Heart left ventricle (tissue), 16 donors: ENCODE measurements at regions of chr11 and their contacts with region 1.

Region 1: GRCh38 chr11:130131961-130132850 is 27.4 kb upstream of the ST14 start:
- DNase-seq: peak in 1 of 5 donors; percentile 41
- ATAC-seq: peak in 3 of 4 donors; percentile 59 to 79 (median 74)
- H3K4me3 ChIP-seq: no peak overlapping the region
- H3K27ac ChIP-seq: no peak overlapping the region
- H3K4me1 ChIP-seq: peaks cover 0 to 4% (median 0%) of the 10 kb centered on the region in 12 donors
- H3K27me3 ChIP-seq: no peaks in the 10 kb centered on the region
- CTCF ChIP-seq: peak; percentile 73 to 89 (median 83)
- POLR2A ChIP-seq: no peak

Region 2: GRCh38 chr11:129917231-129917630 is 215.0 kb before region 1 on chr11:
- intact Hi-C with region 1: loop called in 5 of 10 experiments (anchors 2 kb)
- DNase-seq: no peak
- ATAC-seq: no peak
- H3K4me3 ChIP-seq: no peak overlapping the region
- H3K27ac ChIP-seq: no peak overlapping the region
- H3K4me1 ChIP-seq: no peaks in the 10 kb centered on the region
- H3K27me3 ChIP-seq: no peaks in the 10 kb centered on the region
- CTCF ChIP-seq: no peak
- POLR2A ChIP-seq: no peak

Region 3: GRCh38 chr11:129922674-129923073 is 209.5 kb before region 1 on chr11:
- intact Hi-C with region 1: loop called (anchors 1 to 2 kb)
- DNase-seq: no peak
- ATAC-seq: no peak
- H3K4me3 ChIP-seq: no peak overlapping the region
- H3K27ac ChIP-seq: no peak overlapping the region
- H3K4me1 ChIP-seq: peaks cover 0 to 4% (median 0%) of the 10 kb centered on the region in 12 donors
- H3K27me3 ChIP-seq: no peaks in the 10 kb centered on the region
- CTCF ChIP-seq: no peak
- POLR2A ChIP-seq: no peak

Region 4: DNA sequence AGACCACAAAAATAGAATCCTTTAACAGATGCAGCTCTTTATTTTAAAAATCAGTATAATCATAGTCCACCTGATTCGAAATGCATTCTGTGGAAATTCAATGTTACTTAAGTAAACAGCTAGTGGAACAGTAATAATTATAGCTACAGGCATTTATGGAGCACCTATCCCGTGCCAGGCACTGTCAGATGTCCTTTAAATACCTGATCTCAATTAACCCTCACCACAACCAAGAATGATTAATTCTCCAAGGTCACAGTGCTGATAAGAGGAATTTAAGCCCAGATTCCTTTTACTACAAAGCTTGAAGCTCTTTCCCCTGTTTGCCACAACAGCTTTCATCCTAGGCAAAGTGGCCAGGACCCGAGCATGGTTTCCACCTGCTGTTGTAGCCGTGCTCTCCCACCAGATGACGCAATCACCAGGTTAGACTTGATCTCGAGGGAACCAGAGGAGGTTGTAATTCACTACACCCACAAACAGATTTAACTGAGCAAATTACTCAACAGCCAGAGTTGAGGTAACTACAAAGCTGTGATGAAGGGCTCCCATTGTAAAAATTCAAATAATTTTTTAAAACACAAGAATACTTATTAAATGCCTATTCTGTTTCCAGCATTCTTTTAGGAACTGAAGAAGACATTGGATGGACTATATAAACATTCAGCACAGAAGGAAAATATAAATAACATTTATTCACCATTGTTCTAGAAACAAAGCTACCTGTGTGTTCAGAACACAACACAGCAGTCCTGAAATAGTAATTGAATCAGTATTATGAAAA is 139.9 kb before region 1 on chr11:
- intact Hi-C with region 1: loop called in 2 of 10 experiments (anchors 5 to 10 kb)
- DNase-seq: no peak
- ATAC-seq: peak in 3 of 4 donors; percentile 54 to 72 (median 57)
- H3K4me3 ChIP-seq: no peak overlapping the region
- H3K27ac ChIP-seq: no peak overlapping the region
- H3K4me1 ChIP-seq: peaks cover 0 to 25% (median 12%) of the 10 kb centered on the region in 12 donors
- H3K27me3 ChIP-seq: no peaks in the 10 kb centered on the region
- CTCF ChIP-seq: peak in 7 of 12 donors; percentile 16 to 39 (median 33)
- POLR2A ChIP-seq: no peak

Region 5: GRCh38 chr11:130002846-130003716 is 129.1 kb before region 1 on chr11:
- intact Hi-C with region 1: loop called in 7 of 10 experiments (anchors 5 to 10 kb)
- DNase-seq: peak; percentile 95 to 97 (median 96)
- ATAC-seq: peak; percentile 90 to 95 (median 92)
- H3K4me3 ChIP-seq: peak overlapping the region; percentile 55 to 94 (median 80)
- H3K27ac ChIP-seq: peak overlapping the region; percentile 95 to 100 (median 100)
- H3K4me1 ChIP-seq: peaks cover 0 to 25% (median 19%) of the 10 kb centered on the region in 12 donors
- H3K27me3 ChIP-seq: no peaks in the 10 kb centered on the region
- CTCF ChIP-seq: no peak
- POLR2A ChIP-seq: peak; percentile 67 to 90

Region 6: GRCh38 chr11:130069684-130070108 is 62.5 kb before region 1 on chr11 and contains the start of gene APLP2:
- intact Hi-C with region 1: loop called in 8 of 10 experiments (anchors 2 to 10 kb)
- DNase-seq: peak; percentile 99 to 100 (median 100)
- ATAC-seq: peak; percentile 94 to 98 (median 97)
- H3K4me3 ChIP-seq: peak within 1 kb of the TSS; percentile 59 to 99 (median 82)
- H3K27ac ChIP-seq: peak within 1 kb of the TSS; percentile 78 to 98 (median 95)
- H3K4me1 ChIP-seq: peaks cover 0 to 30% (median 20%) of the 10 kb centered on the region in 12 donors
- H3K27me3 ChIP-seq: no peaks in the 10 kb centered on the region
- CTCF ChIP-seq: no peak
- POLR2A ChIP-seq: peak; percentile 33 to 88
- total RNA-seq, gene APLP2: 215 to 423 (median 334) TPM

Region 7: DNA sequence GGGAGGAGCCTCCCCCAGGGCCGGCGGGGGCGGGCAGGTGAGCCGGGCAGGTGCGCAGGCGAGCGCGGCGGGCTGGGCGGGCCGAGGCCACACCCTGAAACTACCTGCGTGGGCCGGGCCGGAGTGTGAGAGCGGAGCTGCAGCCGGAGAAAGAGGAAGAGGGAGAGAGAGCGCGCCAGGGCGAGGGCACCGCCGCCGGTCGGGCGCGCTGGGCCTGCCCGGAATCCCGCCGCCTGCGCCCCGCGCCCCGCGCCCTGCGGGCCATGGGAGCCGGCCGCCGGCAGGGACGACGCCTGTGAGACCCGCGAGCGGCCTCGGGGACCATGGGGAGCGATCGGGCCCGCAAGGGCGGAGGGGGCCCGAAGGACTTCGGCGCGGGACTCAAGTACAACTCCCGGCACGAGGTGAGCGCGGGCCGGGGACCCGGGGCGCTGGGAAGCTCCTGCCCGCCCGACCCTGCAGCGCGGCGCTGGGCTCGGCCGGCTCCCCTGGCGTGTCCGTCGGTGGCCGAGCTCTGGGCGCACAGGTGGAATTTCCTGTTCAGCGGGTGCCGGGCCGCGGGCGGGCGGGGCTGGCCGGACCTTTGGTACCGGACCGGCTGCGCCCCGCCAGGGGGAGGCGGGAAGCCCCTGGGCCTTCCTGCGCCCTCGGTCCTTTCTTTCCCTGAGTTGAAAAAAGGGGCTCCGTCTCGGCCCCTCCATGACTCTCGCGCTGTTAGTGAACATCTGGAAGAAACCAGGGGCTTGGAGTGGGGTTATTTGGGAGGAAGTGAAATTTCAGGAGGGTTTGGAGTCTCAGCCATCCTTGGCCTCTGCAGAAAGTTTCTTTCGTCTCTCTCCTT is 27.7 kb after region 1 on chr11 and contains the start of gene ST14:
- intact Hi-C with region 1: no loop called
- DNase-seq: peak in 1 of 5 donors; percentile 22
- ATAC-seq: peak in 2 of 4 donors; percentile 38 to 45
- H3K4me3 ChIP-seq: peak within 1 kb of the TSS; percentile 17 to 59 (median 34)
- H3K27ac ChIP-seq: no peak within 1 kb of the TSS
- H3K4me1 ChIP-seq: peaks cover 0 to 59% (median 12%) of the 10 kb centered on the region in 12 donors
- H3K27me3 ChIP-seq: peaks cover 0 to 34% (median 24%) of the 10 kb centered on the region in 9 donors
- CTCF ChIP-seq: no peak
- POLR2A ChIP-seq: no peak
- total RNA-seq, gene ST14: 0.37 to 13.0 (median 1.3) TPM